ENCODE measurements at regions of chr9 and their contacts with region 1.

Region 1: GRCh38 chr9:16689352-16689938 is 181.0 kb downstream of the BNC2 start:
- DNase-seq: peak; percentile 15
- H3K4me3 ChIP-seq: no peak overlapping the region
- H3K27ac ChIP-seq: no peak overlapping the region
- H3K4me1 ChIP-seq: peaks cover 2 to 15% (median 7%) of the 10 kb centered on the region in 4 donors
- H3K27me3 ChIP-seq: no peaks in the 10 kb centered on the region
- CTCF ChIP-seq: no peak
- EP300 ChIP-seq: no peak
- POLR2A ChIP-seq: no peak

Region 2: DNA sequence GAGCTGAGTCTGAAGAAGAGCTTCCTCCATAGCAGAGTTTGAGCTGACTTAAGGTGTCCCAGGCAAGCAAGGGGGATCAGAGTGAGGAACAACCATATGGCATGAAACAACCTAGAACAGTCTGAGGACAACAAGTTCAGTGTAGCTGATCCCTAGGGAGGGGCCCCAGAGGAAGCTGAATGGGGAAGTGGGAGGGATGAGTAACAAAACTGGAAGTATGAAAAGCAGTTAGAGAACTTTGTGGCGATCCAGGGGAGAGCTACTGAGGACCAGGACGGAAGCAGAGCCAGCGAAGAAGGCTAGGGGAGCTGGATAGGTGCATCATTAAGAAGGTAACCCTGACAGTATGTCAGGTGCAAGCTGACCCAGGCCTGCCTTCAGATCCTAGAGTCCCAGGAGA is 399.8 kb before region 1 on chr9:
- in situ Hi-C with region 1: no loop called
- intact Hi-C with region 1: loop called (anchors 5 kb)
- DNase-seq: no peak
- H3K4me3 ChIP-seq: no peak overlapping the region
- H3K27ac ChIP-seq: no peak overlapping the region
- H3K4me1 ChIP-seq: no peaks in the 10 kb centered on the region
- H3K27me3 ChIP-seq: no peaks in the 10 kb centered on the region
- CTCF ChIP-seq: no peak
- EP300 ChIP-seq: no peak
- POLR2A ChIP-seq: no peak

Measured in transverse colon (tissue), 4 donors.